ENCODE measurements at regions of chr6 and their contacts with region 1.

Region 1: DNA sequence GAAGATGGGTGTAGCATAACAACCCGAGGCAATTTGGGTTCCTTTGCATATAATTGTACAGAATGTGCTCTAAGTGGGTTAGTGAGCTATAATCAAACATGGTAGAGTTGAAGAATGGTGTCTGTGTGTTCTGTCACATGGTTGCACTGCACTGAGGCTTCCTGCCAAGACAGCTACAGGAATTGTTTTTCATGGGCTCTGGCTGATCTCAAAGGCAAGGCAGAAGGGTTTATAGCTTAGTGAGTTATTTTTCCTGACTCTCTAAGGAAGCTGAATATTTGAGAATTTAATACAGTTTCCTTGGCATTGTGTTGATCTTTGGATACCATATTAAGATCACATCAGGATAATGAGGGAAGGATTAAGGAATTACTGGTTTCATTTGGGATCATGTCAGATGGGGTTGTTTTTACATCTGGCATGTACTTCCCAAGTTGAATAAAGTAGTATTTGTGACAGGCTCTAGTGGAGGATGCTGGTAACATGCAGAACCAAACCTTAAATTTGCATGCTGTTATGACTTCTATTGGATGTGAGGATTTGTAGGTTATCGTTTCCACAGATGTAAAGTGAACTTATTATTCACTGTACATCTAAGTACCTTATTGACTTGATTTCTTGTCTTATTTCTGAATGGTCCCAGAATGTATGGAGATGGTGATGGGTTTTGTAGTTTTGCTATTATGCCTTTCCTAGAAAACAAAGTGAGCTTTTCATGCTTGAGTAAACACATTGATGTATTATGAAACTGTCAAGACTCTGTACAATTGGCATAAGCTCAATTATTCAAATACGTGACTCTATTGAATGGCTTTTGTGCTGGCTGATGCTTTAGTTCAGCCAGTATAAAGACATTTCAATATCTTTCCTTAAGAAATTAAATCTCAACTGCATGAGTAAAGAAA is 43.3 kb downstream of the LRRC1 start:
- DNase-seq: no peak
- H3K4me3 ChIP-seq: no peak overlapping the region
- H3K27ac ChIP-seq: no peak overlapping the region
- H3K4me1 ChIP-seq: peaks cover 3% of the 10 kb centered on the region
- H3K27me3 ChIP-seq: no peaks in the 10 kb centered on the region
- CTCF ChIP-seq: no peak

Region 2: DNA sequence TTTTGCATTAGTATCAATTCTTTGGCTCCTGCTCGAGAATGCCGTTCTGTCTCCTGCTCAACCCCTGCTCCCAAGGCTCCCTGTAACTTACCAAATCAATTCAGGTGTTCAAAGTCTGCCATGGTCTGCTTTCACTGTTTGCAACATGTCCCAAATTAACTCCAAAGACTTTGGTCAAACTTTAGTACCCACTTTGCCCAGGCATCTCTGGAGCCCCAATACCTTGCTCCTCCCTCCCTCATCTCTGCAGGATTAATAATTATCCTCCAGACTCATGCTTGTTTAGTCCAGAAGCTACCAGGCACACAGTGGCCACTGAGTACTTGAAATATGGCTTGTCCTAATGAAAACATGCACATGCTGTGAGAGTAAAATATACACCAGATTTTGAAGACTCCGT is 323.4 kb before region 1 on chr6:
- CTCF ChIA-PET with region 1: interaction called, 11 read pairs
- POLR2A ChIA-PET with region 1: no interaction called
- intact Hi-C with region 1: no loop called
- DNase-seq: peak in 1 of 2 experiments; percentile 10
- H3K4me3 ChIP-seq: no peak overlapping the region
- H3K27ac ChIP-seq: no peak overlapping the region
- H3K4me1 ChIP-seq: peaks cover 8% of the 10 kb centered on the region; the same call in 1 of the 2 replicates
- H3K27me3 ChIP-seq: no peaks in the 10 kb centered on the region
- CTCF ChIP-seq: no peak

Region 3: DNA sequence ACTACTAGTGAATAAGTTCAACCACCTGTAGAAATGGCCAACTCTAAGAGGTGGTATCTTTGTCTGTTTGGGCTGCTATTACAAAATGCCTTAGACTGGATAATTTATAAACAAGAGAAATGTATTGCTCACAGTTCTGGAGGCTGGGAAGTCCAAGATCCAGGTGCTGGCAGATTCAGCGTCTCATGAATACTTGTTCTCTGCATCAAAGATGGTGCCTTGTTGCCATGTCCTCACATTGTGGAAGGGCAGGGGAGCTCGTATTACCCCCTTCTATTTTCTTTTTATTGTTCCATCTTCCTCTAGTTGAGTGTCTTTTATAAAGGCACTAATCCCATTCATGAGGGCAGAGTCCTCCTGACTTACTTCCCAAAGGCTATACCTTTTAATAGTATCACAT is 14.7 kb after region 1 on chr6:
- CTCF ChIA-PET with region 1: no interaction called
- POLR2A ChIA-PET with region 1: interaction called, 16 read pairs
- intact Hi-C with region 1: no loop called
- DNase-seq: no peak
- H3K4me3 ChIP-seq: no peak overlapping the region
- H3K27ac ChIP-seq: no peak overlapping the region
- H3K4me1 ChIP-seq: peaks cover 24% of the 10 kb centered on the region
- H3K27me3 ChIP-seq: no peaks in the 10 kb centered on the region
- CTCF ChIP-seq: no peak

Region 4: GRCh38 chr6:53938810-53939209 is 100.7 kb after region 1 on chr6:
- CTCF ChIA-PET with region 1: no interaction called
- POLR2A ChIA-PET with region 1: no interaction called
- intact Hi-C with region 1: no loop called
- DNase-seq: no peak
- H3K4me3 ChIP-seq: no peak overlapping the region
- H3K27ac ChIP-seq: no peak overlapping the region
- H3K4me1 ChIP-seq: no peaks in the 10 kb centered on the region
- H3K27me3 ChIP-seq: no peaks in the 10 kb centered on the region
- CTCF ChIP-seq: no peak

Measured in PC-9 (cell line).